ENCODE measurements at regions of chr7 and their contacts with region 1.

Region 1: GRCh38 chr7:123635551-123636359 is 19.9 kb upstream of the LMOD2 start:
- DNase-seq: no peak
- ATAC-seq: peak; percentile 71

Region 2: DNA sequence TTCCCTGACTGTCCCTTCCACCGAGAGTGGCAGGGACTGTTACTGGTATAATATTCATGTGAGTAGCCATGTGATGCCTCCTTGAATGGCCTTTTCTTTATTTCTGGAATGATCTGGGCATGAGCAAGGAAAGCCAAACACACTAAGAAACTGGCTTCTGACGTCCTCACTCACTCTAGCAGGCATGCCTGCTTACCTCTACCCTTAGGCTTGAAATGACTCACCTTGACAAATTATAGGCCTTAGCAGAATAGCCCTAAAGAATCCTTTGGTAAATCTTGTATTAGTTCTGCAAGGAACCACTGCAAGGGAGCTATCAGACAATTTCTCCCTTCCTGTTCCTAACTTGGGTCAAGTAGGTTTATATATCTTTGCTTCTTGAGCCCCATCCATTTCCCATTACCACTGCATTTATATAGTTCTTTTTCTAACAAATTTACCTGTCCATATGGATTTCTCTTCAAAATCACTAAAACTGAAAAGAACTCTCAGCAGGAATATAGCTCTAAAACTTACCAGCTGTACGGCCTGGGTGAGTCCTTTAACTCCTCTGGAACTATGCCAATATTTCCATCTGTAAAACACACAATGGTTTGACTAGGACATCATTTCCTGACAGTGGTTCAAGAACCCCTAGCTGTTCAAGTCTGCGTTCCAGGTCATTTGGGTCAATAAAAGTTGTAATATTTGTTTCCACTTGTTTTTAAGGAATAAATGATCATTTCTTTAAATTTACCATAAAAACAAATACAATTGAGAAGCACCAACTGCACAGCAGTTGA is 65.2 kb before region 1 on chr7:
- intact Hi-C with region 1: no loop called
- DNase-seq: no peak
- ATAC-seq: no peak

Region 3: DNA sequence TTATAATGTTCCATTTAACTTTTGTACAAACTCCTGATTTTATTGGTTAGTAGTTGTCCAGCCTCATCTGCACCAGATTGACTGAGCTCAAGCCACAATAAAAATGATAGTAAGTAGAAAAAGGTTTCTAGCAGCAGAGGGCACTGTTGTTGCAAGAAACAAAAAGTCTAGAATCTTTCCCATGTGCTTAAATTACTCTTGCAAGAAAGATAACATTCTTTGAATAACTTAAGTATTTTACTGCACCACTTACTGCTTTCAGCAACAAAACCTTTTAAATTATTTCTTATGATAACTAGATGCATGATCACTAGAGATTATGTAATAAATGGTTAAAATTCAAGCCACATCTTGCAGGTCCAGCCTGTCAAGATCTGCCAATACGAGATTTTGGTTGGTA is 46.9 kb after region 1 on chr7:
- intact Hi-C with region 1: loop called (anchors 10 kb)
- DNase-seq: no peak
- ATAC-seq: peak; percentile 65

Region 4: DNA sequence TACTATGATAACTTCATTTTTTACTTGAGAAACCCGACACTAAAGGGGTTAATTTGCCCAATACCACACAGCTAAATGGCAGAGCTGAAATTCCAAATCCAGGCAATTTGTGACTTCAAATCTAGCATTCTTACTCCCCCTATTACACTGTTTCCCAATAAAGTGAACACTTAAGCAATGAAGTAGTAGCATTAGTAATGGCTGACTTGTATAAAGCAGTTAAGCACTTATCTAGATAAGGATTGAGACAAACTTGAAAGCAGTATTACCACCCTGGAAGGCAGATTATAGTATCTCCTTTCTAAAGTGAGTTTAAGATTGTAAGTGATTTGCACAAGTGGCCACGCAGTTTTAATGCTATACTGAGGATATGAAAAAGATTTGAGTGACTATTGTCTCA is 73.8 kb after region 1 on chr7:
- intact Hi-C with region 1: loop called (anchors 5 kb)
- DNase-seq: no peak
- ATAC-seq: no peak

Region 5: GRCh38 chr7:123865517-123866117 is 229.9 kb after region 1 on chr7:
- intact Hi-C with region 1: loop called (anchors 10 kb)
- DNase-seq: no peak
- ATAC-seq: peak; percentile 90

Measured in Right ventricle myocardium superior (tissue), 1 donor.